ENCODE measurements at regions of chr6 and their contacts with region 1.

Region 1: DNA sequence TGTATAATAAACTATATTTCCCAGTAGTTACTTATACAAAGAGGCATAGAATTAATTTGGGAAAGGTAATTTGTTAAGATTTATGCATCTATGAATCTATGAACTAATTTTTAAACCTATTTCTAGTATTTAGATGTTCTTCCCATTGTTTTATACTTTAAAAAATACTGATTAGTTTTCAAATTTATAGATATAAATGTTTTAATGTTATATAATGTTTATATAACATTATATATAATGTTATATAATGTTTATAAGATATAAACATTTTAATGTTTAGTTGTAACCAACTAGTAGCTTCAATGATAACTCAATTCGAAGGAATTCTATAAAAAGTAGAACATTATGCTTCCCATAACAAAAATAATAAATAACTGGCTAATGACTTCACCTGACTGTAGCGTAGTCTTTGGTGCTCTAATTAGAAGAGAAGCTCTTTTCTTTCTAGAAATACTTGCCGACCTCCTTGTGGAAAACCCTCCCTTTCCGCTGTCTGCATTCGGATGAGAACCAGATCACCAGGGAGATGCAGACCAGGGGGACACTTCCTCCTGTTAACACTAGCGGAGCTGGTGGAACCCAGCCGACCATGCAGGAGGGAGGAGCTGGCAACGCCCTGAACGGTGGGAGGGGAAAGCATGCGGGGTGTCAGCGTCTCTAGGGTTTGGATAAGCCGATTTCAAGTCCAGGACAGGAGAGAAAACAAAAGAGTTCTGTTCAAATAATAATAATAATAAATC is 158.4 kb downstream of the OR2B2 start:
- DNase-seq: peak; percentile 56 to 60
- ATAC-seq: peak; percentile 47 to 62 (median 57)
- H3K4me3 ChIP-seq: peak overlapping the region; percentile 75
- H3K27ac ChIP-seq: no peak overlapping the region
- H3K4me1 ChIP-seq: no peaks in the 10 kb centered on the region
- H3K27me3 ChIP-seq: peaks cover 0 to 23% (median 10%) of the 10 kb centered on the region in 3 donors
- CTCF ChIP-seq: no peak

Region 2: DNA sequence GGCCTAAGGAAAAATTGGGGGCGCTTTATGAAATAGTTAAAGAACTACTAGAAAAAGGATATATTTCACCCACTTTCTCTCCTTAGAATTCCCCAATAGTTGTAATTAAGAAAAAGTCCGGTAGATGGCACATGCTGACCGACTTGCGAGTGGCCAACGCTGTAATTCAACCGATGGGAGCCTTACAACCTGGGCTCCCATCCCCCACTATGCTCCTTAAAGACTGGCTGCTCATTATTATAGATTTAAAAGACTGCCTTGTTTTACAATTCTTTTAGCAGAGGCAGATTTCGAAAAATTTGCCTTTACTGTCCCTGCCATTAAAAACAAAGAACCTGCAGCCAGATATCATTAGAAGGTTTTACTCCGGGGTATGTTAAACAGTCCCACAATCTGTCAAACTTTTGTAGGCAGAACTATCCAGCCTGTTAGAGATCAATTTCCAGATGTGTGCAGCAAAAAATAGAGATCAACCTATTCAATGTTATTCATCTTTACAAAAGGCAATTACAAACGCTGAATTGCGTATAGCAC is 564.9 kb before region 1 on chr6:
- intact Hi-C with region 1: loop called (anchors 2 to 5 kb)
- DNase-seq: peak; percentile 40 to 59
- ATAC-seq: peak; percentile 90 to 96 (median 94)
- H3K4me3 ChIP-seq: peak overlapping the region; percentile 86
- H3K27ac ChIP-seq: peak overlapping the region; percentile 71
- H3K4me1 ChIP-seq: peaks cover 4% of the 10 kb centered on the region
- H3K27me3 ChIP-seq: peaks cover 0 to 1% (median 0%) of the 10 kb centered on the region in 3 donors
- CTCF ChIP-seq: peak; percentile 76

Region 3: GRCh38 chr6:27503436-27504030 is 250.3 kb before region 1 on chr6:
- intact Hi-C with region 1: loop called in 1 of 2 experiments (anchors 5 kb)
- DNase-seq: peak; percentile 55 to 68
- ATAC-seq: peak; percentile 60 to 73 (median 66)
- H3K4me3 ChIP-seq: peak overlapping the region; percentile 63
- H3K27ac ChIP-seq: no peak overlapping the region
- H3K4me1 ChIP-seq: peaks cover 4% of the 10 kb centered on the region
- H3K27me3 ChIP-seq: peaks cover 3 to 35% (median 5%) of the 10 kb centered on the region in 3 donors
- CTCF ChIP-seq: no peak

Region 4: GRCh38 chr6:27518881-27519795 is 234.7 kb before region 1 on chr6:
- intact Hi-C with region 1: loop called in 1 of 2 experiments (anchors 2 kb)
- DNase-seq: peak; percentile 45 to 70
- ATAC-seq: peak; percentile 84 to 94 (median 89)
- H3K4me3 ChIP-seq: peak overlapping the region; percentile 80
- H3K27ac ChIP-seq: peak overlapping the region; percentile 75
- H3K4me1 ChIP-seq: peaks cover 10% of the 10 kb centered on the region
- H3K27me3 ChIP-seq: peaks cover 0 to 2% (median 0%) of the 10 kb centered on the region in 3 donors
- CTCF ChIP-seq: peak; percentile 69

Region 5: GRCh38 chr6:27650620-27651370 is 103.0 kb before region 1 on chr6:
- intact Hi-C with region 1: no loop called
- DNase-seq: no peak
- ATAC-seq: no peak
- H3K4me3 ChIP-seq: no peak overlapping the region
- H3K27ac ChIP-seq: no peak overlapping the region
- H3K4me1 ChIP-seq: no peaks in the 10 kb centered on the region
- H3K27me3 ChIP-seq: peaks cover 0 to 13% (median 5%) of the 10 kb centered on the region in 3 donors
- CTCF ChIP-seq: no peak

Region 6: GRCh38 chr6:27902335-27903314 is 148.8 kb after region 1 on chr6:
- intact Hi-C with region 1: loop called in 1 of 2 experiments (anchors 5 kb)
- DNase-seq: peak; percentile 70 to 82
- ATAC-seq: peak; percentile 89 to 95 (median 93)
- H3K4me3 ChIP-seq: peak overlapping the region; percentile 76
- H3K27ac ChIP-seq: peak overlapping the region; percentile 77
- H3K4me1 ChIP-seq: no peaks in the 10 kb centered on the region
- H3K27me3 ChIP-seq: no peaks in the 10 kb centered on the region
- CTCF ChIP-seq: no peak